Lower leg skin (tissue), 4 donors: ENCODE measurements at regions of chr19 and their contacts with region 1.

Region 1: GRCh38 chr19:13588957-13589833 is 82.9 kb upstream of the CACNA1A start:
- DNase-seq: peak; percentile 26 to 91
- H3K4me3 ChIP-seq: no peak overlapping the region
- CTCF ChIP-seq: peak in 1 of 3 donors; percentile 53
- POLR2A ChIP-seq: no peak

Region 2: GRCh38 chr19:13044231-13044836 is 544.9 kb before region 1 on chr19:
- intact Hi-C with region 1: loop called (anchors 5 kb)
- DNase-seq: no peak
- H3K4me3 ChIP-seq: no peak overlapping the region
- CTCF ChIP-seq: no peak
- POLR2A ChIP-seq: no peak

Region 3: GRCh38 chr19:13277104-13277809 is 311.9 kb before region 1 on chr19:
- intact Hi-C with region 1: loop called (anchors 5 kb)
- DNase-seq: peak in 1 of 2 donors; percentile 60
- H3K4me3 ChIP-seq: no peak overlapping the region
- CTCF ChIP-seq: peak in 1 of 3 donors; percentile 68
- POLR2A ChIP-seq: no peak